ENCODE measurements at regions of chr12 and their contacts with region 1.

Region 1: GRCh38 chr12:56333679-56334489 is at the start of gene PAN2:
- DNase-seq: peak; percentile 98
- CTCF ChIP-seq: peak; percentile 39

Region 2: GRCh38 chr12:55822228-55822627 is 511.7 kb before region 1 on chr12:
- CTCF ChIA-PET with region 1: no interaction called
- POLR2A ChIA-PET with region 1: no interaction called
- DNase-seq: no peak
- CTCF ChIP-seq: no peak

Region 3: DNA sequence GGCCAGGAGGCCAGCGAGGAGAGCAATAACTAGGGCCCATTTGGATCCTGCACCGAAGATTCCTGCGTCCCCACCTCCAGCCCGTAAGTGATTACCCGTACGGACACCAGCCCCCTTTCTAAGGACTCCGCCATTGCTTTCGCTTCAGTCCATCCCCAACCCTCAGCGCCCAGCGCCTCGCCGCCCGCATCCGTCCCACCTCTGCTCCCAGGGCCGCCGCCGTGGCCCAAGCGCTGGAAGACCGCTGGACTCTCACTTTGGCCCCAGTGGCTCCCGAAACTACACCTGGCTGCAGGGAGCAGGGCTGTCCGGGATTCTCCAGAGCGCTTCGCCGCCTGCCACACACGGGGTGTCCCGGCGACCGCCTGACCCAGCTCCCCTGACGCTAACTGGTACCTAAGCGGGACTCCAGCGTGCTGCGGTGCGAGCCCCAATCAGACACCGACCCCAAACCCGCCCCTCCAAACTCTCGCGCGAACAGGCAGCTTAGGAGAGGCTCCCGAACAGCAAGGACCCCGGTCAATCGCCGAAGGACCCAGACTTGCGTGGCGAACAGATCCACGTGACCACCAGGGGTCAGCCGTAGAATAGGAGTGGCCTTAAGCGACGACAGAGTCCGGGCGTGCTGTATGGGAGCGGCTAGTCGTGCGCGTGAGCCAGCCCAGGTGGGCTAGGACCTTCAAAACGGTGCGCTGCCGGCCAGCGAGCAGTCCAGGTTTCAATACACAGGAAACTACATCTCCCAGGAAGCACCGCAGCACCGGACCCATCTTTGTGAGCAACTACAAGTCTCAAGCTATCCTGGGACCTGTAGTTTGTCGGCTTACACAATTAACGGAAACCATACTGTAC is 18.0 kb before region 1 on chr12 and contains the start of gene CNPY2:
- CTCF ChIA-PET with region 1: interaction called, 10 read pairs
- POLR2A ChIA-PET with region 1: interaction called, 6 read pairs
- DNase-seq: peak; percentile 96
- CTCF ChIP-seq: peak; percentile 32

Region 4: GRCh38 chr12:56346703-56347102 is 12.8 kb after region 1 on chr12:
- CTCF ChIA-PET with region 1: interaction called, 16 read pairs
- POLR2A ChIA-PET with region 1: no interaction called
- DNase-seq: no peak
- CTCF ChIP-seq: no peak